CD14-positive monocyte (primary cell): ENCODE measurements at regions of chr9 and their contacts with region 1.

Region 1: GRCh38 chr9:84397151-84397728 is 56.7 kb upstream of the SLC28A3 start:
- DNase-seq: peak; percentile 43 to 70 (median 52)
- H3K4me3 ChIP-seq: no peak overlapping the region
- H3K4me3 Mint-ChIP-seq: no peak overlapping the region
- H3K27ac ChIP-seq: no peak overlapping the region
- H3K27ac Mint-ChIP-seq: no peak overlapping the region
- H3K4me1 ChIP-seq: peaks cover 12 to 14% of the 10 kb centered on the region in 2 donors
- H3K4me1 Mint-ChIP-seq: peaks cover 14% of the 10 kb centered on the region
- H3K27me3 ChIP-seq: no peaks in the 10 kb centered on the region
- H3K27me3 Mint-ChIP-seq: peaks cover 0 to 4% (median 3%) of the 10 kb centered on the region in 3 donors
- CTCF ChIP-seq: peak; percentile 96

Region 2: GRCh38 chr9:84357275-84357674 is 40.0 kb before region 1 on chr9:
- intact Hi-C with region 1: no loop called
- DNase-seq: peak in 2 of 3 donors; percentile 5 to 59
- H3K4me3 ChIP-seq: no peak overlapping the region
- H3K4me3 Mint-ChIP-seq: no peak overlapping the region
- H3K27ac ChIP-seq: no peak overlapping the region
- H3K27ac Mint-ChIP-seq: peak overlapping the region in 1 of 7 donors; percentile 58
- H3K4me1 ChIP-seq: peaks cover 0 to 8% of the 10 kb centered on the region in 2 donors
- H3K4me1 Mint-ChIP-seq: peaks cover 19% of the 10 kb centered on the region
- H3K27me3 ChIP-seq: no peaks in the 10 kb centered on the region
- H3K27me3 Mint-ChIP-seq: peaks cover 0 to 3% (median 0%) of the 10 kb centered on the region in 3 donors
- CTCF ChIP-seq: no peak

Region 3: GRCh38 chr9:85425153-85425611 is 1027.9 kb after region 1 on chr9:
- intact Hi-C with region 1: loop called in 1 of 2 experiments (anchors 10 kb)
- DNase-seq: peak; percentile 2 to 32 (median 26)
- H3K4me3 ChIP-seq: no peak overlapping the region
- H3K4me3 Mint-ChIP-seq: peak overlapping the region in 1 of 2 donors; percentile 48
- H3K27ac ChIP-seq: no peak overlapping the region
- H3K27ac Mint-ChIP-seq: no peak overlapping the region
- H3K4me1 ChIP-seq: no peaks in the 10 kb centered on the region
- H3K4me1 Mint-ChIP-seq: peaks cover 3% of the 10 kb centered on the region
- H3K27me3 ChIP-seq: no peaks in the 10 kb centered on the region
- H3K27me3 Mint-ChIP-seq: peaks cover 6 to 16% (median 11%) of the 10 kb centered on the region in 3 donors
- CTCF ChIP-seq: peak; percentile 69

Region 4: GRCh38 chr9:85600675-85601263 is 1203.5 kb after region 1 on chr9:
- intact Hi-C with region 1: loop called in 1 of 2 experiments (anchors 10 kb)
- DNase-seq: no peak
- H3K4me3 ChIP-seq: no peak overlapping the region
- H3K4me3 Mint-ChIP-seq: no peak overlapping the region
- H3K27ac ChIP-seq: peak overlapping the region in 1 of 2 donors; percentile 38
- H3K27ac Mint-ChIP-seq: peak overlapping the region in 4 of 7 donors; percentile 28 to 76 (median 74)
- H3K4me1 ChIP-seq: no peaks in the 10 kb centered on the region
- H3K4me1 Mint-ChIP-seq: peaks cover 2% of the 10 kb centered on the region
- H3K27me3 ChIP-seq: no peaks in the 10 kb centered on the region
- H3K27me3 Mint-ChIP-seq: peaks cover 0 to 2% (median 0%) of the 10 kb centered on the region in 3 donors
- CTCF ChIP-seq: no peak